ENCODE measurements at regions of chr12 and their contacts with region 1.

Region 1: DNA sequence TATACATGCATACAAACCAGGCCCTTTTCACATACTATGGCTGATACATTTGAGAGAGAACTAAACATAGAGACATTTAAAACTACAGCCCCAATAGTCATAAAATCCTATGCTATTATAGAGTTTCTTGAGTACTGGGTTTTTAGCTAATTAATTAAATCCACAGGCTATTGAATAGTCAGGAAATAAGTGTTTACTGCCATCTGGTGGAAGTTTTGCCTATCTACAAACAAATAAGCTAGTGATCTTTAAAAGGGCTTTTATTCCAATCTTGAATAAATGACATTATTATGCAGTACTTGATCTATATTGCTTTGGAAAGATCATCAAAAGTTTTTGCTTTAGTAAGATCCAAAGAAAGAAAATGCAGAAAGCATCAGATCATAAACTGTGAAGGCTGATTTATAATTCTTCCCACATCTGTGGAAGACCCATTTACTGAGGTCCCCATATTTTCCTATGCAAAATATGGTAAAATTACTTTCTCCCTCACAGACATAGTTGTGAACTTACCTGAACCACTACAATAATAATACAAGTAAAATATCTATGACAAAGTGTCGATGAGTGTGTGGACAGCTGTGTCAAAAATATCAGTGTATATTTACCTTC is 131.3 kb downstream of the ITPR2 start:
- DNase-seq: no peak
- H3K4me3 Mint-ChIP-seq: no peak overlapping the region
- H3K27ac Mint-ChIP-seq: no peak overlapping the region
- H3K4me1 Mint-ChIP-seq: peaks cover 15% of the 10 kb centered on the region
- H3K27me3 Mint-ChIP-seq: no peaks in the 10 kb centered on the region

Region 2: DNA sequence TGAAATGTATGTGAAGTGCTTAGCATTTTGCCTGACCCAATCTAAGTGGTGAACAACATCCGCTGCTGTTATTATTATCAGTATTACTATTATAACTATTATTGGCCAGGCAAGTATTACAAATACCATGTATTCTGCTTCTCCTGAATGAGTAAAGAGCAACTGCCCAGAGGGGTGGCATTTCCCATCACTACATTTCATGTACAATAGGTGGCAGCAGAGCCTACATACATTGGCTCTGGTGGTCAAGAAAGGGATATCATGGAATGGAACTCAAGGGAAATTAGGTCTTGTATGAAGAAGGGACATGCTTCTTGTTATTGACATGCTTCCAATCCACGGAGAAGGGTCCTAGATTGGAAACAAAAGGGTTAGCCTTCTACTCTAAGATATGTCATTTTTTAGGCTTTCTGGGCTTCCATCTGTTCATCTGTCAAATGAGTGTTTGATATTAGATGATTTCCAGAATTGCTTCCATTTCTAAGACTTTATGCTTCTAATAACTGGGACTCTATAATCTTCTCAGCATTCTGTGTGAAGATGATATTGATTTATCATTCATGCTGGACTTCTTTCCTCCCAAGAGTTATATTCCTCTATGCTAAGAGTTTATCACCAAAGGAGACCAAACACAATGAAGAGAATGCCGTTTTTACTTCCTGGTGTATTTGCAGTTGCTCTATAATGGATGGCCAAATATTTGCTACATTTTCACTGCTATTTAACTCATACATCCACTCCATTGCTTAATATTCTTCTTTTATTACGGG is 267.2 kb before region 1 on chr12:
- intact Hi-C with region 1: loop called (anchors 10 kb)
- DNase-seq: no peak
- H3K4me3 Mint-ChIP-seq: no peak overlapping the region
- H3K27ac Mint-ChIP-seq: no peak overlapping the region
- H3K4me1 Mint-ChIP-seq: no peaks in the 10 kb centered on the region
- H3K27me3 Mint-ChIP-seq: no peaks in the 10 kb centered on the region

Measured in activated T-helper 2 cell treated with anti-CD3 and anti-CD28 coated beads, Interferon-gamma antibody, Interleukin-2, Interleukin-4, amounts not matched to agents 10 μg/mL and 5 μg/mL and 100 μg/mL, durations not matched to agents 14 hours and 24 hours and 36 hours (primary cell).